Activated CD8-positive, alpha-beta T cell treated with anti-CD3 and anti-CD28 coated beads for 36 hours (primary cell): ENCODE measurements at regions of chr10 and their contacts with region 1.

Region 1: GRCh38 chr10:11113156-11113555 is 95.5 kb downstream of the CELF2 start:
- DNase-seq: peak; percentile 50
- ATAC-seq: peak; percentile 92
- H3K4me3 Mint-ChIP-seq: no peak overlapping the region
- H3K27ac Mint-ChIP-seq: peak overlapping the region; percentile 26
- H3K4me1 Mint-ChIP-seq: peaks cover 18% of the 10 kb centered on the region
- H3K27me3 Mint-ChIP-seq: no peaks in the 10 kb centered on the region
- CTCF ChIP-seq: peak; percentile 64

Region 2: GRCh38 chr10:10923029-10923651 is 190.0 kb before region 1 on chr10:
- CTCF ChIA-PET with region 1: no interaction called
- POLR2A ChIA-PET with region 1: no interaction called
- intact Hi-C with region 1: no loop called
- DNase-seq: no peak
- ATAC-seq: no peak
- H3K4me3 Mint-ChIP-seq: no peak overlapping the region
- H3K27ac Mint-ChIP-seq: no peak overlapping the region
- H3K4me1 Mint-ChIP-seq: no peaks in the 10 kb centered on the region
- H3K27me3 Mint-ChIP-seq: no peaks in the 10 kb centered on the region
- CTCF ChIP-seq: no peak

Region 3: DNA sequence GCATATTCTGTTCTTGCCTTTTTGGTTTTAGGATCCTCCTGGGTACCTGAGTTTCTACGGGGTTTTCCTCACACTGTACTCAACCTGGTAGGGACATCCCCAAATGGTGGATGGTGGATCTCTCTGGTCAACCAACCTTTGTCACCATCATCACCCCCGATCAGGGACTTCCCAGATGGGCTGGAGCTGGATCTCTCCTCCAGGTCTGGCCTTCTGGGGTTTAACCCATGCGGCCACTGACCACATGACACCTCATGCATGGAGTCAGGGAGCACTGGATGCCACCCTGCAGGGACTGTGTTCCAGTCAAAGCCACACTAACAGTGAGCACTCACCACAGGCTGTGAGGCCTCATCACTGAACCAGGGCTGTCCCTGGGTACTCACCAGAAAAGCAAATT is 15.5 kb before region 1 on chr10:
- CTCF ChIA-PET with region 1: interaction called, 14 read pairs
- POLR2A ChIA-PET with region 1: no interaction called
- intact Hi-C with region 1: no loop called
- DNase-seq: peak; percentile 33
- ATAC-seq: peak; percentile 70
- H3K4me3 Mint-ChIP-seq: no peak overlapping the region
- H3K27ac Mint-ChIP-seq: no peak overlapping the region
- H3K4me1 Mint-ChIP-seq: no peaks in the 10 kb centered on the region
- H3K27me3 Mint-ChIP-seq: peaks cover 6% of the 10 kb centered on the region
- CTCF ChIP-seq: no peak

Region 4: GRCh38 chr10:11125004-11125403 is 11.8 kb after region 1 on chr10:
- CTCF ChIA-PET with region 1: interaction called, 25 read pairs
- POLR2A ChIA-PET with region 1: interaction called, 4 read pairs
- intact Hi-C with region 1: no loop called
- DNase-seq: no peak
- ATAC-seq: no peak
- H3K4me3 Mint-ChIP-seq: no peak overlapping the region
- H3K27ac Mint-ChIP-seq: no peak overlapping the region
- H3K4me1 Mint-ChIP-seq: peaks cover 12% of the 10 kb centered on the region
- H3K27me3 Mint-ChIP-seq: no peaks in the 10 kb centered on the region
- CTCF ChIP-seq: no peak

Region 5: DNA sequence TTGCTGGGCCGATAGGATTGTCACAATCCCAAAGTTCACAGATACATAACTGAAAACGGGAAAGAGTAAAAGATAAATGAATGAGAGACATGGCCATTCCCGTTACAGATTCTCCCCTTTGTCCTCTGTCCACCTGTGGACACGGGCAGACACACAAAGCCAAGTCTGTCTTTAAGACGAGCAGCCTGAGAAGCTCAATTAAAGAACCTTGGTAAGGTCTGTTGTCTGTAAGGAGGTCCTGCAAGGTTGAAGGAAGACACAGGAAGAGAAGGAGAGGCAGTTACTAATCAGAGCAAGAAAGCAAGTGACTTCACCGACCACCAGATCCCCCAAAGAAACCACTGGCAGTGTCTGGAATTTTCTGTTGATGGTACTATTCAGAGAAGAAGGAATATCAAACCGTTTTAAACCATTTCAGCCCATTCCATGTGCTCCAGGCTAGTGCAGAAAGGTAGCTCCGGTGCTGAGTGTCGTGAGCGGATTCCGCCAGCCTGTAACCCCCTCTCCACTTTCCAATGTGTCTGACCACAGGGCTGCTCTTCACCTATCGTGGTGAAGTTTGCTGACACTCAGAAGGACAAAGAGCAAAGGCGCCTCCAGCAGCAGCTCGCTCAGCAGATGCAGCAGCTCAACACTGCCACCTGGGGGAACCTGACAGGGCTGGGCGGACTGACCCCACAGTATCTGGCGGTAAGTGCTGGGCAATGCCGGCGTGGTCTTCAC is 157.1 kb after region 1 on chr10:
- CTCF ChIA-PET with region 1: interaction called, 19 read pairs
- POLR2A ChIA-PET with region 1: no interaction called
- intact Hi-C with region 1: loop called (anchors 2 kb)
- DNase-seq: peak; percentile 85
- ATAC-seq: peak; percentile 83
- H3K4me3 Mint-ChIP-seq: peak overlapping the region; percentile 3
- H3K27ac Mint-ChIP-seq: peak overlapping the region; percentile 82
- H3K4me1 Mint-ChIP-seq: peaks cover 81% of the 10 kb centered on the region
- H3K27me3 Mint-ChIP-seq: no peaks in the 10 kb centered on the region
- CTCF ChIP-seq: peak; percentile 86

Region 6: DNA sequence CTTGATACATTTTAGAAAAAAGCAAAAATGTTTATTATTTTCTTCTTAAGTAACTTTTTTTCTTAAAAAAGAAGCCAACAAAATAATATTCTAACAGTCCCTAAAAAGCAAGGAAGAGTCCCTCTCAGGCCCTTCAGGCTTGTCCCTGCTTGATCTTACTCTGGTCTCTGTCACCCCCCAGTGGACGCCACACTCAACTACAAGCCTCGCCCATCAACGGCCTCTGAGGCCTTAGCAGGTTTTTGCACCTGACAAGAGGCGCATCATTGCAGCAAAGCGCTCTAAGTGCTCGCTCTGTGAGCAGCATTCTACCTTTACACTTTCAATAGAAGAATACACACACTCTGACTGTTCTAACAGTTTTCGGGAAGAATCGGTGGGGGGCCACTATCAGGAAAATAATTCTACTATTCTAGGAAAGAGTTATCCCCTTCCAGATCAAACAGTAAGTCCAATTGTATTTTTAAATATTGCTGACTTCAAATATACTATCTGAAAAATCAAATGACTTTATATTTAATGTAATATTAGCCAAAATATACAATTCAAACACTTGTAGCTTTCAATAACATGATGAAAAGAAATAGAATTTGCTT is 359.1 kb after region 1 on chr10:
- CTCF ChIA-PET with region 1: no interaction called
- POLR2A ChIA-PET with region 1: no interaction called
- intact Hi-C with region 1: loop called (anchors 5 kb)
- DNase-seq: peak; percentile 80
- ATAC-seq: peak; percentile 99
- H3K4me3 Mint-ChIP-seq: no peak overlapping the region
- H3K27ac Mint-ChIP-seq: no peak overlapping the region
- H3K4me1 Mint-ChIP-seq: no peaks in the 10 kb centered on the region
- H3K27me3 Mint-ChIP-seq: no peaks in the 10 kb centered on the region
- CTCF ChIP-seq: peak; percentile 98